MCF 10A (cell line): ENCODE measurements at regions of chr2 and their contacts with region 1.

Region 1: DNA sequence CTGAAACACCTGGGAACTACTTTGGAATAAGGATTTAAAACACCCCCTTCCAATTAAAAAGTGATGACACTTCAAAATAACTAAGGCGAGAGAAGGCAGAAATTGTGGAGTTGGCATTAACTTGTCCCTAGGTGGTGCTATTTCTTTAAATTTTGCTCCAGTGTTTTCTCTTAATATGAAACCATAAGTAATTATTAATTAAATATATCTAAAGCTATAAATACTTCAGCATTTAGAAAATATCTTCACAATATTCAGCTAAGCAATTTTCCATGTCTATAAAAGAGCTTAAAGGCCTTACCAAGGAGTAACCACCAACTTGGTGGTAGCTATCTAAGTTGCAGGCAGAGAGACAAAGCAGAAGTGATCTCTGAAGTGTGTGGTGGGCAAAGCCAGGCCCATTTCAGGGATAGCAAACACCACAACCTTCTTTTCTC is 186.8 kb upstream of the PGAP1 start:
- DNase-seq: peak; percentile 43
- H3K4me3 Mint-ChIP-seq: no peak overlapping the region
- H3K27ac Mint-ChIP-seq: no peak overlapping the region
- H3K4me1 Mint-ChIP-seq: no peaks in the 10 kb centered on the region
- H3K27me3 Mint-ChIP-seq: no peaks in the 10 kb centered on the region
- CTCF ChIP-seq: peak; percentile 63

Region 2: DNA sequence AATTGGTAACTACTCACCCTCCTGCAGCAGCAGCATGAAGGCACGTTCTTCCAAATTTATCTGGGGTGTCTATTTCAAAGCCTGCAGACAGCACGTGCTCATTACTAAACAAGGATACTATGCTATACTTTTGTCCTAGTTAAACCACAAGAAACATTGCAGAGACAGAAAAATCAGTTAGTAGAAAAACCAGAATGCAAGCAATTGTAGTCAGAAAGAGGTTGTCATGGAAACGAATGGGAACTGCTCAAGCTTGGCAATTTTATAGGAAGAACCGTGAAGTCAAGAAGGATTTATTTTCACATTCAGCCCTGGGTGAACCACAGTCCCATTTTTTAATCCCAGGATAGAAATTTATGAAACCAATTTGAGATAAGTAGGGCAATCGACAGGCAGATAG is 24.6 kb before region 1 on chr2:
- CTCF ChIA-PET with region 1: interaction called, 11 read pairs
- POLR2A ChIA-PET with region 1: no interaction called
- intact Hi-C with region 1: no loop called
- DNase-seq: no peak
- H3K4me3 Mint-ChIP-seq: no peak overlapping the region
- H3K27ac Mint-ChIP-seq: no peak overlapping the region
- H3K4me1 Mint-ChIP-seq: no peaks in the 10 kb centered on the region
- H3K27me3 Mint-ChIP-seq: no peaks in the 10 kb centered on the region
- CTCF ChIP-seq: no peak

Region 3: GRCh38 chr2:197124639-197125390 is 11.5 kb after region 1 on chr2:
- CTCF ChIA-PET with region 1: interaction called, 34 read pairs
- POLR2A ChIA-PET with region 1: interaction called, 3 read pairs
- intact Hi-C with region 1: no loop called
- DNase-seq: no peak
- H3K4me3 Mint-ChIP-seq: no peak overlapping the region
- H3K27ac Mint-ChIP-seq: no peak overlapping the region
- H3K4me1 Mint-ChIP-seq: no peaks in the 10 kb centered on the region
- H3K27me3 Mint-ChIP-seq: no peaks in the 10 kb centered on the region
- CTCF ChIP-seq: no peak

Region 4: DNA sequence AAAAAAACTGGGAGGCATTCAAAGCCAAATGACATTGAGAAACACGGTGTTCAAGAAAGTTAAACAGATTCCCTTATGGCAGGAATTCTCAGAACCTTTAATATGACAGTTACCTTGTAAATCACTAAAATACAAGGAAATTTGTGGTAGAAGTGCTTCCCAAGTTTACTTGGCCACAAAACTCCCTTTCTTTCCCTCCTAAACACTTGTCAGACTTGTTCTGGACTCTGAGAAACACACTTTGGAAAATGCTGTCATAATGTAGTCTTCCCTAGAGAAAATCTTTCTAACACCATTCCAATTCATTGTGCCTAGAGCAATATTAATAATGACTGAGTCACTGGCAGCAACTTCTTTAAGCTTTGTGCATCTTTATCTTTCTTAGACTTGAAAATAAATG is 56.9 kb after region 1 on chr2:
- CTCF ChIA-PET with region 1: interaction called, 17 read pairs
- POLR2A ChIA-PET with region 1: no interaction called
- intact Hi-C with region 1: no loop called
- DNase-seq: no peak
- H3K4me3 Mint-ChIP-seq: no peak overlapping the region
- H3K27ac Mint-ChIP-seq: no peak overlapping the region
- H3K4me1 Mint-ChIP-seq: no peaks in the 10 kb centered on the region
- H3K27me3 Mint-ChIP-seq: no peaks in the 10 kb centered on the region
- CTCF ChIP-seq: no peak

Region 5: DNA sequence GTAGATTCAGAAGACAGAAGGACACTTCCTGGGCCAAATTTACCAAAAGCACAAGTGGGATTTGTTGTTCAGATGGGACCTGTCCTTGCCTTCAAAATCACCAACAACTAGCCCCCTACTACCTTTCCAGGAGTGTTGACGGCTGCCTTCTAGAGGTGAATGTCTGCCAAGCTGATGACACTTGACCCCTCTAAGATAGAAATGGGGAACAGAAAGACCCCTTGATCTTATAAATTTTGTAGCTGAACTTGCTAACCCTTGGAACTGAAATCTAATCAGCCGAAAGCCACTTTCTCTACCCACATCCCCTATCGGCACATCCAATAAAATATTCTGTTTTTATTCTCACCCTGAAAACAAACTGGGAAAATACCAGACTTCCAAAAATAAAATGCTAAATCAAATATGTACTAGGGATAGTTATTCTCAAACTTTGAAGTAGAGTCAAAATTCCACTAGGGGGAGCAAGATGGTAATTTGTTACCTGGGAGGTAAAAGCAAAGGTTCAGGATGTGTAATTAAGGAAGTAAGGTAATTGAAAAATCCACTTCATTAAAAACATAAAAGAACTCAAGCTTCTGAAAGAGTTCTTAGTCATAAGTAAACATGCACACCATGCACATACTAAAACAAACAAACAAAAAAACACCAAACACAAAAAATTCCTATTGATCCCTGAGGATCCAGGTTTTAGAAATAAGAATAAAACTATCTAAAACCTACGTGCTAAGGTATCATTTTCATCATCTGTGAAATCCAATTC is 78.1 kb after region 1 on chr2:
- CTCF ChIA-PET with region 1: interaction called, 41 read pairs
- POLR2A ChIA-PET with region 1: no interaction called
- intact Hi-C with region 1: loop called (anchors 1 kb)
- DNase-seq: peak; percentile 61
- H3K4me3 Mint-ChIP-seq: no peak overlapping the region
- H3K27ac Mint-ChIP-seq: no peak overlapping the region
- H3K4me1 Mint-ChIP-seq: no peaks in the 10 kb centered on the region
- H3K27me3 Mint-ChIP-seq: no peaks in the 10 kb centered on the region
- CTCF ChIP-seq: peak; percentile 67

Region 6: GRCh38 chr2:197378494-197379307 is 265.4 kb after region 1 on chr2:
- CTCF ChIA-PET with region 1: interaction called, 60 read pairs
- POLR2A ChIA-PET with region 1: no interaction called
- intact Hi-C with region 1: loop called (anchors 1 kb)
- DNase-seq: peak; percentile 74
- H3K4me3 Mint-ChIP-seq: peak overlapping the region; percentile 19
- H3K27ac Mint-ChIP-seq: no peak overlapping the region
- H3K4me1 Mint-ChIP-seq: peaks cover 16% of the 10 kb centered on the region
- H3K27me3 Mint-ChIP-seq: peaks cover 12% of the 10 kb centered on the region
- CTCF ChIP-seq: peak; percentile 70

Region 7: DNA sequence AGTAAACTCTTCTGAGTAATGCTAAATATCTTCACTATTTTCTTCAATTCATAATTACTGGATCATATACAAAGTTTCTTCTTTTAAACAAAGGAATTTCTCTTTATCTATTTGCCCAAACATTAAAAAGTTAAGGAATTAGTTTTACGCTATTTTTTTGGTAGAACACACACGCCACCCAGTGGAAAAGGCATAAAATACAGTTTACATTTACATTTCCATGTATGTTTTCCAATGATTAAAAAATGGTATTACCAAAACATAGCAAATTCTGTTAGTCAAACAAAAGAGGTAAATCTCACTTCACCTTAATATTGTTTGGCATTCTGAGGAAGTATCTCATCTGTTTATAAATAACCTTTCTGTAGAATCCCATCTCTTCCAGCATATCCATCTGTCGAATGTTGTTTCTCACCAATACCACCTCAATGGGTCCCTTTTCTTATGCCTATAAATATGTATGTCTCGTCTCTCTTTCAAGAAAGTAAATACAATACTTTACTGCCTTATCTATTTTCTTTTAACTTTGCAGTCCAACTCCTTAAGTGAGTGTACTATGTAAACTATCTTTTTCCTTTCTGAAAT is 664.6 kb after region 1 on chr2:
- CTCF ChIA-PET with region 1: interaction called, 3 read pairs
- POLR2A ChIA-PET with region 1: no interaction called
- intact Hi-C with region 1: loop called (anchors 5 kb)
- DNase-seq: peak; percentile 65
- H3K4me3 Mint-ChIP-seq: no peak overlapping the region
- H3K27ac Mint-ChIP-seq: no peak overlapping the region
- H3K4me1 Mint-ChIP-seq: peaks cover 6% of the 10 kb centered on the region
- H3K27me3 Mint-ChIP-seq: peaks cover 11% of the 10 kb centered on the region
- CTCF ChIP-seq: peak; percentile 64